MCF 10A (cell line): ENCODE measurements at regions of chr1 and their contacts with region 1.

Region 1: GRCh38 chr1:34781071-34781843 is at the start of gene GJB3:
- DNase-seq: peak; percentile 67
- H3K4me3 Mint-ChIP-seq: peak within 1 kb of the TSS; percentile 96
- H3K27ac Mint-ChIP-seq: peak within 1 kb of the TSS; percentile 92
- H3K4me1 Mint-ChIP-seq: peaks cover 55% of the 10 kb centered on the region
- H3K27me3 Mint-ChIP-seq: no peaks in the 10 kb centered on the region
- CTCF ChIP-seq: no peak
- total RNA-seq, gene GJB3: 67.1 and 74.8 TPM in 2 replicates

Region 2: GRCh38 chr1:34754964-34755637 is 26.2 kb before region 1 on chr1 and contains the start of gene GJB5:
- CTCF ChIA-PET with region 1: interaction called, 20 read pairs
- POLR2A ChIA-PET with region 1: no interaction called
- intact Hi-C with region 1: loop called (anchors 1 kb)
- DNase-seq: peak; percentile 94
- H3K4me3 Mint-ChIP-seq: peak within 1 kb of the TSS; percentile 93
- H3K27ac Mint-ChIP-seq: peak within 1 kb of the TSS; percentile 96
- H3K4me1 Mint-ChIP-seq: peaks cover 16% of the 10 kb centered on the region
- H3K27me3 Mint-ChIP-seq: no peaks in the 10 kb centered on the region
- CTCF ChIP-seq: no peak
- total RNA-seq, gene GJB5: 26.5 and 33.2 TPM in 2 replicates

Region 3: DNA sequence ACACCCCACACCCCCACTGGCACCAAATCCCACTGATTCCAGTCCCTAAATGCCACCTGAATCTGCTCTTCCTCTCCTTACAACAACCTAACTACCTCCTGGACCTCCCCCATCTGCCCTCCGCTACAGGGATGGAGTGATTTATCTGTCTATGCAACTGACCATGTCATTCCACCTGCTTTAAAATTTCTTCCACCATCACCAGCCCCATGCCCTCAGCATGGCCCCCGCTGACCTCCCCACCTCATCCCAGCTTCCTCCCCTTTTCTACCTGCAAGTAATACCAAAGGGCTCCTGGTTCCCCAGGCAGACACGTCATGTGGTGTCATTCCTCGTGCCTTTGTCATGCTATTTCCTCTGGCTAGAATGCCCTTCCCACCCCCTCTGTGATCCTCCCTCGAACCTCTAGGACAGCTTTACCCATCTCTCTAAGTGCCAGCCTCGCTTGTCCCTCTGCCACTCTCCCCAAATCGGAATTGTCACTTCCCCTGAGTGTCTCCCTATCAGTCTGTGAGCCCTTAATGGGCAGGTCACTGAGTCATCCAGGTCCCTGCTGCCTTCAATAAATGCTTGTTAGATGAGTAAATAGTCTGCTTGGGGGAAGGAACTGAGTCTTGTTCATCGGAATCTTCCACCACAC is 18.0 kb before region 1 on chr1:
- CTCF ChIA-PET with region 1: interaction called, 4 read pairs
- POLR2A ChIA-PET with region 1: interaction called, 3 read pairs
- intact Hi-C with region 1: loop called (anchors 1 kb)
- DNase-seq: peak; percentile 67
- H3K4me3 Mint-ChIP-seq: peak overlapping the region; percentile 57
- H3K27ac Mint-ChIP-seq: peak overlapping the region; percentile 86
- H3K4me1 Mint-ChIP-seq: peaks cover 13% of the 10 kb centered on the region
- H3K27me3 Mint-ChIP-seq: no peaks in the 10 kb centered on the region
- CTCF ChIP-seq: no peak

Region 4: DNA sequence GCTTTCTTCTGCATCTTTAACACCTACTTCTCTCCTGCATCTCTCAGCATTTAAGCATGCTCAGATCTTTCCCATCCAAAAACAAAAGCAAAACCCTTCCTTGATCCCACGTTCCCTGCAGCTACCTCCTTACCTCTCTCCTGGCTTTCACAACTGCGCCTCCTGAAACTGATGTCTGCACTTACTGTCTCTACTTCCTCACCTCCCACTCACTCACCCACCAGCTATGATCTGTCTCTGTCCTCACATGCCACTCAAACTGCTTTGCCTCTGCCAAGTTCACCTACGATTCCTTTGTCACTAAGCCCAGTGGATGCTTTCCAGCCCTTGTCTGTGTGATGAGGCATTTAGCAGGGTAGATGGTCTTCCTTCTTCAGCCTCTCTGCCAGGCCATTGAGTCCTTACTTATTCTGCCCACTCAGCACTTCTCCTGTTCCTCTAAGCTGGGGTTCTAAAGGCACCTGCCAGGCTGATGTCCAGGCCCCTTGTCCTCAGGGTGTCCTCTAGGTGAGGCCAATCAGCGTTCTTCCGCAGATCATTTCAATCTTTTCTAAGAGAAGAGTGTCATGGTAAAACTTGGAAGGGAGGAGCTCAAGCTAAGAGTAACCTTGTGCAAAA is 10.3 kb before region 1 on chr1:
- CTCF ChIA-PET with region 1: interaction called, 7 read pairs
- POLR2A ChIA-PET with region 1: interaction called, 23 read pairs
- intact Hi-C with region 1: no loop called
- DNase-seq: peak; percentile 47
- H3K4me3 Mint-ChIP-seq: no peak overlapping the region
- H3K27ac Mint-ChIP-seq: no peak overlapping the region
- H3K4me1 Mint-ChIP-seq: no peaks in the 10 kb centered on the region
- H3K27me3 Mint-ChIP-seq: no peaks in the 10 kb centered on the region
- CTCF ChIP-seq: no peak

Region 5: DNA sequence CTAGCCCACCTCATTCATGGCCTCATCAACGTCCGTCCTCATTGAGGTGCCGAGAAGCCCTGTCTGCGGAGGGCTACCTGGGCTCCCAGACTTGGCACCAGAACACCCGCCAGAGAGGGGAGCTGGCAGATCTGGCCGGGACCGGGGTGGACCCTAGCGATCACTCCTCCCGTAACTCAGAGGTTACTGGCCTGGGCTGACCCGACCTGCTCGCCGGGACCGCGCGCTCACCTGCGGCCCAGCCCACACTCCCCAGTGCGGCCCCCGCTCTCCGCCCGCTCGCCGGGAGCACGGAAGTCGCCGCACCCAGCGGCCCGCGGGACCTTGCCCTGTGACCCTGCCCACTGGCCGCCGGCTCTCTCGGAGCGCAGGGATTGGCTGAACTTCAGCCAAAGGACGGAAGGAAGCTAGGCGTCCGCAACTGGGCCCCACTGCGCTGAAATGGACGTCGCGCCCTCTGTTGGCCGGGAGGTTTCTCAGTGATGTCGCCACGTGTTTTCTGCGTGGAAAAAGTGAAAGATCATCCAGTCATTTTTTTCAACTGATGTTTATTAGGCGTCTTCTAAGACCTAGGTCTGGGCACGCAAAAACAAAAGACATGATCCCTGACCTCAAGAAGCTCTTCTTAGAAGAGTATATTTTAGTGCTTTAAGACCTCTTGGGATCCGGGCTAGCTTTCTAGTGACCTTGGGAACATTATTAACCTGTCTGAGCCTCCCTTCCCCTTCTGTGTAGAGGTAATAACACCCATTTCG is 78.4 kb after region 1 on chr1 and contains the start of gene SMIM12:
- CTCF ChIA-PET with region 1: interaction called, 19 read pairs
- POLR2A ChIA-PET with region 1: interaction called, 10 read pairs
- intact Hi-C with region 1: no loop called
- DNase-seq: peak; percentile 95
- H3K4me3 Mint-ChIP-seq: peak within 1 kb of the TSS; percentile 93
- H3K27ac Mint-ChIP-seq: peak within 1 kb of the TSS; percentile 79
- H3K4me1 Mint-ChIP-seq: peaks cover 16% of the 10 kb centered on the region
- H3K27me3 Mint-ChIP-seq: peaks cover 9% of the 10 kb centered on the region
- CTCF ChIP-seq: peak; percentile 79
- total RNA-seq, gene SMIM12: 40.2 and 41.4 TPM in 2 replicates